ENCODE measurements at regions of chr2 and their contacts with region 1.

Region 1: DNA sequence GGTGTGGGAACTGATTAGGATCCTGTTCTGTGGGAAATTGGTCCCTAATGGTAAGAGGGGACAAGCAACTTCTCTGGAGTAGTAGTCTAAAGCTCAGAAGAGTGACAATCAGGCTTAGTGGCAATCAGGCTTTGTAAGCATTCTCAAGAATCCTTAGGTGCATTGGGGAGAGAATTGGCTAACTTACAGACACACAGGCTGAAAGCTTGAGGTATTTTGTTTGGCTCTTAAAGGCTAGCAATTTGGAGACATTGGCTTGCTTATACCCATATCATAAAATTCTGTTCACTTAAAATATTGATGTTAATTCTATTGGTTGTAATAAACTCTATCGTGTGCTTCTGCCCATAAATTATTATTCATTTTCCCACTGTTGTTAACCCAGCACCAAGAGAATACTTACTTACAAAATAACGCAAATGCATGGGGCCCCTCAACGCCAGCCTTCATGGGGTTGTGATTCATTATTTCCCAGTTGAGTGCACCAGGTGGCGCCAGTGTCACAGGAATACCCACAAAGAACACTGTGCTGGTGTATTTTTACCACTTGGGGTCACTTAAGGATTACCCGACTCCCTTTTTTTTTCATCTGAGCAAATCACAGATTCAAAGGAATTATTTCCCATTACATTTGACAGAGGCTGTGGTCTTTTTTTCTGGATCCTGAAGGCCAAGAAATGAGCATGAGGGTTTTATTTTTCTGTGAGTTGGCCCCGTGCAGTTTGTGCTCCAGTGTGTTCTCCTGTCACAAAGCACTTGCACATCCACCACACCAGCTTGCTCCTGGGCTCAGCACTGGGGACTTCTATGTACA is 45.5 kb downstream of the DDX1 start:
- DNase-seq: peak in 1 of 2 experiments; percentile 51
- H3K4me3 ChIP-seq: no peak overlapping the region
- H3K27ac ChIP-seq: no peak overlapping the region
- H3K4me1 ChIP-seq: no peaks in the 10 kb centered on the region
- H3K27me3 ChIP-seq: no peaks in the 10 kb centered on the region
- CTCF ChIP-seq: peak; percentile 97

Region 2: GRCh38 chr2:15472133-15472532 is 165.0 kb before region 1 on chr2:
- CTCF ChIA-PET with region 1: no interaction called
- POLR2A ChIA-PET with region 1: no interaction called
- intact Hi-C with region 1: no loop called
- DNase-seq: peak in 1 of 2 experiments; percentile 40
- H3K4me3 ChIP-seq: no peak overlapping the region
- H3K27ac ChIP-seq: no peak overlapping the region
- H3K4me1 ChIP-seq: no peaks in the 10 kb centered on the region
- H3K27me3 ChIP-seq: no peaks in the 10 kb centered on the region
- CTCF ChIP-seq: no peak

Region 3: DNA sequence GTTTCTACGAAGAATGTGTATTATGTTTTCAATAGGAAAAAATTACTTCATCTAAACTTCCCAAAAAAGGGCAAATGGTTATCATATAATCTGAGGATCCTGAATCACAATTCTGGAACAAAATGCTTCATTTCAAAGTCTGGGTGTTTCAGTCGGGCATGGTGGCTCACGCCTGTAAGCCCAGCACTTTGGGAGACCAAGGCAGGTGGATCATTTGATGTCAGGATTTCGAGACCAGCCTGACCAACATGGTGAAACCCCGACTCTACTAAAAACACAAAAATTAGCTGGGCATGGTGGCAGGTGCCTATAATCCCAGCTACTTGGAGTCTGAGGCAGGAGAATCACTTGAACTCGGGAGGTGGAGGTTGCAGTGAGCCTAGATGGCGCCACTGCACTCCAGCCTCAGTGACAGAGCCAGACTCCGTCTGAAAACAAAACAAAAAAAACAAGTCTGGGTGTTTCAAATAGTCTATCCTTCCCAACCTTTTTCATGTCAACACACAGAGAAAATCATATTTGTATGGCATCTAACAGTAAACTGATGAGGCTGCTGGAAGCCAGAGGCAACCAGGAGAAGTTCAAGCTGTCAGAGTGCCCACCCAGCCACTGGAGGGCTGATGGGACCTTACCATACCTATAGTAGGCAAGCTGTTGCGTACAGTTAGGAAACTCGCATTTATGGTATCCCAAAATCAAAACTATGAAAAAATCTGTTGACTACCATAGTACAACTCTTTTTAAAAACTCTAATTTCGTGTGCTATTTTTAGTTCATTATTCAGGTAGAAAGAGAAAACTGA is 90.7 kb before region 1 on chr2:
- CTCF ChIA-PET with region 1: no interaction called
- POLR2A ChIA-PET with region 1: no interaction called
- intact Hi-C with region 1: no loop called
- DNase-seq: no peak
- H3K4me3 ChIP-seq: no peak overlapping the region
- H3K27ac ChIP-seq: no peak overlapping the region
- H3K4me1 ChIP-seq: no peaks in the 10 kb centered on the region
- H3K27me3 ChIP-seq: no peaks in the 10 kb centered on the region
- CTCF ChIP-seq: 0 out of 2 replicates have a peak, but pooled peaks have one; percentile 41

Region 4: DNA sequence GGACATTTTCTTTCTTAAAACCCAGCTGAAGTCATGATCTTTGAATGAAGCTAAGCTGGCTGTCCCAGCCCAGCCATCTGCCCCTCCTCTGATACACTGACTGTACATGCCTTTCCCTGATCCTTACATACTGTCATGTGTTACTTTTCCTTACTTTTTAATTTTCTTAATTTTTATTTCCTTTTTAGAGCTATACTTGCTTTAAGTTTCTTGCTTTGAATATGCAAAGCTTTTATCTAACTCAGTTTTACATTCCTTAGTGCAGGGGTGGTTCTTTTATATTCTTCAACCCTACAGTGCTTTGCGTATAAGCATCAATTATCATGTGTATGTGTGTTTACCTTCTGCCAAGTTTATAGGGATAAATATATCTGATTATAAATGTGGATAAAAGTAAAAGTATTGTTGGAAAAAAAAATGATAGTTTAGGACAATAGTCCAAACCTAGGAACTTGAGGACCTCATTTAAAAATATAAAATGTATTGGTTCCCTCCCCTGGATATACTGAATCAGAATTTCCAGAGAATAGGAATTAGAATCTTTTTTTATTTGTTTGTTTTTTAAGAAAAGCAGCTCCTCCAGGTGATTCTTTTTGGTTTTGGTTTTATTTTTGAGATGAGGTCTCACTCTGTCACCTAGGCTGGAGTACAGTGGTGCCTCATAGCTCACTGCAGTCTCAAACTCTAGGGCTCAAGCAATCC is 27.7 kb before region 1 on chr2:
- CTCF ChIA-PET with region 1: no interaction called
- POLR2A ChIA-PET with region 1: no interaction called
- intact Hi-C with region 1: no loop called
- DNase-seq: no peak
- H3K4me3 ChIP-seq: no peak overlapping the region
- H3K27ac ChIP-seq: no peak overlapping the region
- H3K4me1 ChIP-seq: no peaks in the 10 kb centered on the region
- H3K27me3 ChIP-seq: no peaks in the 10 kb centered on the region
- CTCF ChIP-seq: no peak

Region 5: GRCh38 chr2:16281451-16282336 is 644.5 kb after region 1 on chr2:
- CTCF ChIA-PET with region 1: no interaction called
- POLR2A ChIA-PET with region 1: no interaction called
- intact Hi-C with region 1: loop called (anchors 1 kb)
- DNase-seq: no peak
- H3K4me3 ChIP-seq: no peak overlapping the region
- H3K27ac ChIP-seq: no peak overlapping the region
- H3K4me1 ChIP-seq: no peaks in the 10 kb centered on the region
- H3K27me3 ChIP-seq: peaks cover 40% of the 10 kb centered on the region
- CTCF ChIP-seq: peak; percentile 44

Region 6: DNA sequence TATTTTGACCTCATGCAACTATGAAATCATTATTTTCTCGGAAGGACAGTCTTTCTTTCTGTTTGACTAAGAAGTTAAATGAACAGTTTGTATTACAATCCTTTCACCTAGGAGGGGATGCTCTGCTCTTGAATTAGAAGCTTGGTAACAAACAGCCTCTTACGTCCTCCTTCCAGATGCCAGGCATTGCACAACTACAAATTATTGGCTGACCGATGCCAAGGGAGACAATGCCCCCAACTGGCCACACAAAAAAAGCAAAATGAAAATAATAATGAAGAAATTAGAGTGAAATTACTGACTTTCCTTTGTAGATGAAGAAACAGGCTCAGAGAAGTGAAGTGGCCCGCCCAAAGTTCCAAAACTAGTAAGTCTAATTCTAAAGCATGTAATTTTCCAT is 850.5 kb after region 1 on chr2:
- CTCF ChIA-PET with region 1: no interaction called
- POLR2A ChIA-PET with region 1: no interaction called
- intact Hi-C with region 1: loop called (anchors 1 kb)
- DNase-seq: peak in 1 of 2 experiments; percentile 43
- H3K4me3 ChIP-seq: no peak overlapping the region
- H3K27ac ChIP-seq: no peak overlapping the region
- H3K4me1 ChIP-seq: no peaks in the 10 kb centered on the region
- H3K27me3 ChIP-seq: peaks cover 18% of the 10 kb centered on the region; the same call in 1 of the 2 replicates
- CTCF ChIP-seq: peak; percentile 65

Region 7: GRCh38 chr2:16507655-16508489 is 870.7 kb after region 1 on chr2:
- CTCF ChIA-PET with region 1: no interaction called
- POLR2A ChIA-PET with region 1: no interaction called
- intact Hi-C with region 1: loop called (anchors 1 kb)
- DNase-seq: peak in 1 of 2 experiments; percentile 16
- H3K4me3 ChIP-seq: peak overlapping the region; percentile 30; the same call in 1 of the 2 replicates
- H3K27ac ChIP-seq: no peak overlapping the region
- H3K4me1 ChIP-seq: no peaks in the 10 kb centered on the region
- H3K27me3 ChIP-seq: peaks cover 51% of the 10 kb centered on the region
- CTCF ChIP-seq: peak; percentile 61

Region 8: GRCh38 chr2:16756831-16757644 is 1119.9 kb after region 1 on chr2:
- CTCF ChIA-PET with region 1: no interaction called
- POLR2A ChIA-PET with region 1: no interaction called
- intact Hi-C with region 1: loop called (anchors 1 kb)
- DNase-seq: peak; percentile 49 to 63
- H3K4me3 ChIP-seq: no peak overlapping the region
- H3K27ac ChIP-seq: no peak overlapping the region
- H3K4me1 ChIP-seq: no peaks in the 10 kb centered on the region
- H3K27me3 ChIP-seq: no peaks in the 10 kb centered on the region
- CTCF ChIP-seq: peak; percentile 97